Activated CD4-positive, alpha-beta T cell treated with anti-CD3 and anti-CD28 coated beads, Interleukin-2, amount 10 ng/mL, durations not matched to agents 24 days and 14 days (primary cell): ENCODE measurements at regions of chr3 and their contacts with region 1.

Region 1: GRCh38 chr3:59212128-59212779 is 162.4 kb upstream of the CFAP20DC start:
- DNase-seq: peak; percentile 73
- H3K4me3 Mint-ChIP-seq: no peak overlapping the region
- H3K27ac Mint-ChIP-seq: no peak overlapping the region
- H3K4me1 Mint-ChIP-seq: peaks cover 9% of the 10 kb centered on the region
- H3K27me3 Mint-ChIP-seq: peaks cover 11% of the 10 kb centered on the region

Region 2: GRCh38 chr3:59424268-59425010 is 212.2 kb after region 1 on chr3:
- intact Hi-C with region 1: loop called (anchors 10 kb)
- DNase-seq: peak; percentile 71
- H3K4me3 Mint-ChIP-seq: peak overlapping the region; percentile 1
- H3K27ac Mint-ChIP-seq: peak overlapping the region; percentile 73
- H3K4me1 Mint-ChIP-seq: peaks cover 52% of the 10 kb centered on the region
- H3K27me3 Mint-ChIP-seq: no peaks in the 10 kb centered on the region

Region 3: GRCh38 chr3:59575113-59576001 is 363.1 kb after region 1 on chr3:
- intact Hi-C with region 1: loop called (anchors 2 kb)
- DNase-seq: peak; percentile 95
- H3K4me3 Mint-ChIP-seq: no peak overlapping the region
- H3K27ac Mint-ChIP-seq: no peak overlapping the region
- H3K4me1 Mint-ChIP-seq: peaks cover 14% of the 10 kb centered on the region
- H3K27me3 Mint-ChIP-seq: no peaks in the 10 kb centered on the region

Region 4: DNA sequence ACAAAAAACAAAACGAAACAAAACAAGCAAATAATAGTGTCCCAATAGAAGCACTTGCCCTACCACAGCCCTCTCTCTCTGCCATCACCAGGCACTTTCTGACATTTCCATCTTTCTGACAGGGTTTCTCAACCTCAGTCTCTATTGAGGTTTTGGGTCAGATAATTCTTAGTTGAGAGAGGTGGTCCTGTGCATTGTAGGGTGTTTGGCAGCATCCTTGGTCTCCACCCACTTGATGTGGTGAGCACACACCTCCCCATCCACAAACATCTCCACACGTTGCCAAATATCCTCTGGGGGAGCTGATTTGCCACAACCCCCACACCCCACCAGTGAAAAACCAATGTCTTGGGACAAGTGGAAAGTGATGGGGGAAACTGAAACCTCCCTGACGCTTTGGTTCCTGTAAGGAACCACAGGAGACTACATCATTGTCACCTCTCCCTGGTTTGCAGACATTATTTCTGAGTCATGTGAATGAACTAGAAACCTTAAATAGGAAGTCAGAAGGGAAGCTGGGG is 571.3 kb after region 1 on chr3:
- intact Hi-C with region 1: loop called (anchors 10 kb)
- DNase-seq: peak; percentile 79
- H3K4me3 Mint-ChIP-seq: peak overlapping the region; percentile 39
- H3K27ac Mint-ChIP-seq: peak overlapping the region; percentile 76
- H3K4me1 Mint-ChIP-seq: peaks cover 31% of the 10 kb centered on the region
- H3K27me3 Mint-ChIP-seq: no peaks in the 10 kb centered on the region

Region 5: DNA sequence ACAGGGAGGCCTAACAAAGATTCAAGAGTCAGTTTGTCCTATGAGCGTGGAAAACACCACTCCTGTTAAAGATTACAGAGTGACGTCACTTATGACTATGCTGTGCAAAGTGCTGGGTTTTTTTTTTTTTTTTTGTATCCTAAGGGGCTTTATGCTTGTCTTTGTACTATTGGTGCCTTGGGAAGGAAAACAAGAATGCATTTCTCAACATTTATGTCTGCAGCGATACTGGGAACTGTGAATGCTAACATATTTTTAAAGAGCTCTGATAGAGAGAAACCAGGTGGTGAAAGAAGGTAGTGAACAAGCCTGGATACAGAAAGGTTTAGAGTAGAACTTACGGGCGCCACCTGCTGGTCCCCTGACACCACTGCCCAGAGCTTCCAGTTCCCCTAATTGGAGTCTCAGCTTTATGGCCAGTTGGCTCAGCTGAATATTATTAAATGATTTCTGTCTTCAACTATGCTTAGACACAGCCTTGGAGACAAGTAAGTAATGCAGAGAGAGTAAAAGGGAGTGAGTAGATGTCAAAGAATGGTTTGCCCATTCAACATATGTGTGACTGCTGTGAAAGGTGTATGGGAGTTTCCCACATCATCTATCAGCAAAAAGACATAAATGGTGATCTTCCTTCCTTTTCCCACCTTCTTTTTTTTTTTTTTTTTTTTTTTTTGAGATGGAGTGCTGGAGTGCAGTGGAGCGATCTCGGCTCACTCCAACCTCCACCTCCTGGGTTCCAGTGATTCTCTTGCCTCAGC is 645.5 kb after region 1 on chr3:
- intact Hi-C with region 1: loop called (anchors 1 kb)
- DNase-seq: peak; percentile 91
- H3K4me3 Mint-ChIP-seq: no peak overlapping the region
- H3K27ac Mint-ChIP-seq: peak overlapping the region; percentile 59
- H3K4me1 Mint-ChIP-seq: peaks cover 13% of the 10 kb centered on the region
- H3K27me3 Mint-ChIP-seq: no peaks in the 10 kb centered on the region